Activated T-helper 1 cell treated with anti-CD3 and anti-CD28 coated beads, Interleukin-12 subunit alpha, Interleukin-12 subunit beta, Interleukin-2, Interleukin-4 antibody, amounts not matched to agents 30 ng/mL and 10 ng/mL and 1 ng/mL, durations not matched to agents 14 hours and 24 hours and 36 hours (primary cell): ENCODE measurements at regions of chr1 and their contacts with region 1.

Region 1: DNA sequence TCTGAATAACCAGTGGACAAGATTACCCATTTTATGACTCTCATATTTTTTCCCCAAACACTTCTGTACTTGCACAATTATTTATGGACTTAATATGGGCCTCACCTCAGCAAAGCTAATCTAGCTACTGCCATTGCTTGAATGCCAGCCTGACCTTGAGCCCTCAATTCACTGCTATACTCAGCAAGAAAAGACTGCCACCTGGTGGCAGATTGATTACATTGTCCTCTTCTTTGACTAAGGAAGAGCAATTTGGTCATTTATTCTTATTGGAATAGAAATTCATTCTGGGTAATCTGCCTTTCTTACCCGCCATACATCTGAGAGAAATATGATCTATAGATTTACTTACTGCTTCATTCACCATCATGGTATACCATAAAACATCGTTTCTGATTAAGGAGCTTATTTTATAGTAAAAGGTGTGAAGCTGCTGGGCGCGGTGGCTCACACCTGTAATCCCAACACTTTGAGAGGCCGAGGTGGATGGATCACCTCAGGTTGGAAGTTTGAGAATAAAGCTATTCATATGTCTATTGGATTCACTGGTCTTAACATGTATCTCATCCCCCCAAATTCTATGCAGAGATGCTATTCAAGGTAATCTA is 32.9 kb upstream of the DIPK1A start:
- DNase-seq: peak; percentile 66
- H3K4me3 Mint-ChIP-seq: no peak overlapping the region
- H3K27ac Mint-ChIP-seq: peak overlapping the region; percentile 32
- H3K4me1 Mint-ChIP-seq: peaks cover 48% of the 10 kb centered on the region
- H3K27me3 Mint-ChIP-seq: peaks cover 2% of the 10 kb centered on the region

Region 2: GRCh38 chr1:92749024-92749634 is 245.1 kb before region 1 on chr1:
- intact Hi-C with region 1: loop called (anchors 1 kb)
- DNase-seq: peak; percentile 2
- H3K4me3 Mint-ChIP-seq: no peak overlapping the region
- H3K27ac Mint-ChIP-seq: no peak overlapping the region
- H3K4me1 Mint-ChIP-seq: no peaks in the 10 kb centered on the region
- H3K27me3 Mint-ChIP-seq: peaks cover 9% of the 10 kb centered on the region

Region 3: GRCh38 chr1:92831762-92832536 is 162.3 kb before region 1 on chr1 and contains the start of gene RPL5:
- intact Hi-C with region 1: loop called (anchors 1 kb)
- DNase-seq: peak; percentile 96
- H3K4me3 Mint-ChIP-seq: peak within 1 kb of the TSS; percentile 96
- H3K27ac Mint-ChIP-seq: peak within 1 kb of the TSS; percentile 97
- H3K4me1 Mint-ChIP-seq: peaks cover 35% of the 10 kb centered on the region
- H3K27me3 Mint-ChIP-seq: peaks cover 2% of the 10 kb centered on the region
- total RNA-seq, gene RPL5: 1,115 and 1,120 TPM in 2 replicates

Region 4: DNA sequence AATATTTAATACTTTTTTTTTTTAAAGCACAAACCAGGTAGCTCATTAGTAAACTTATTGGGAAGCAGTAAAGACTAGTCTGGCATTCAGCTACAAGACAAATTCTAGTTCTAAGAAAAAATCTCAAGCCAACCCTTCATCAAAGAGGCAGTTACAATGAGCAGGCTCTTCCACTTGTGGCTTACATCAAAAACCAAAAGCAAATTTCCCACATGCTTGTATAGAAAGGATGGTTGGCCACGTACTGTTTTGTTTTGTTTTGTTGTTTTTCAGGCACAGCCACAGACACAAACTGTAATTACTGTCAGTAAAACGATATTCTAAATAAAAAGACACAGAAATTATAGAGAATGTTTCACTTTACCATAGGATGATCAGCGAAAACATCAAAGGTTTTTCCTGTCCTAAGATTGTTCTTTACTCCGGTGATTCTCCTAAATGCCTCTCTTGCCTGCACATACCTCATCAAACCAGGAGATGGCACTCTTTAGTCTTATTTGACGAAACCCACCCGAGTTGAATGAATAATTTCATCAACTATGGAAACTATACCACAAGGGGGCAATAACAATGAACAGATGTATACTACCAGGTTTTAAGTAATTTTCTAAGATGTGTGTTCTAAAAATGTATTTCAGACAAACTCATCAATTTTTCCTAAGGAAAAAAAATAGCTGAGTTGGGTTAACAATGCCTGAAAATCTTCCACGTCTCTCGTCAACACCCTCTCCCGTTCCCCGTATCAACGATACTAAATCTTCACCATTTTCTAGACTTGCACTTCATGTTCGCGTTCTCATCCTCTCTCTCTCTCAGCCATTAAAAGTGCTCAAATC is 135.4 kb before region 1 on chr1:
- intact Hi-C with region 1: loop called (anchors 1 kb)
- DNase-seq: peak; percentile 57
- H3K4me3 Mint-ChIP-seq: peak overlapping the region; percentile 46
- H3K27ac Mint-ChIP-seq: peak overlapping the region; percentile 64
- H3K4me1 Mint-ChIP-seq: peaks cover 24% of the 10 kb centered on the region
- H3K27me3 Mint-ChIP-seq: no peaks in the 10 kb centered on the region

Region 5: DNA sequence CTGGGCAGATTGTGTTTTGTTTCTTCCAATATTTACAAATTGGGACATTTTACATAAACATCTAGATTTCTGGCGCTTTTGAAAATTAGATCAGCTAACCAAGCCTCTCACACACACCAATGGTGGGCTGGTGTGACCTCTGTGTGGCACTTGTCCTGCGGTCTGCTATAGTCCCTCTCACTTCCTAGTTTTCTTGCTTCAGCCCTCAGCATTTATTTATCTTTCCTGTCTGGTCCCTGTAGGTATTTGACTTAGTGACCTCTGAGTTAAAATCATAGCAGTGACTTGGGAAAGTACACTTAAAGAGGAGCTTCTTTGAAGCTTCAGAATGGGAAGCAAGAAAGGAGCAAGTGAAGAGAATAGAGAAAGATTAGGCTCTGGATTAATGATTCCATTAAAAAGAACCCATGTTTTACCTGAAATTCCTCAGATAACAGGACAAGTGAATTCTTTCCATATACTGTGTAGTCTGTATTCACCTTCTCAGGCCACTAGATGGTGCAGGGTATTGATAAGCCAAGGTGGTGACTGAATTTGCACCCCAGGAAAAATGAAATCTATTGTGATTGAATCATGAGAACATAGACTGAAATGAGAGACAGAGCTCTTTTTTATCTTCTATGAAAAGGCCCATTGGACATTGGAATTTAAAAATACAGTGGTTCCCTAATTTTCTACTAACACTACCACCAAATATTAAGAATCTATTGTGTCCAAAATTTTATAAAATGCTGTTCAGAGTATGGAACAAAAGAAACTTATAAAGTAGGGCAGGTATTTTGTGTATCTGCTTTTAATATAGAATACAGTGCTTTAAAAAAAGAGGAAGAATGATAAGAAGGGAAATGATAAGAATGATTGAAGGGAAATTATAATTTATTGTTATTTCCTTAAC is 25.8 kb before region 1 on chr1:
- intact Hi-C with region 1: loop called (anchors 1 kb)
- DNase-seq: no peak
- H3K4me3 Mint-ChIP-seq: no peak overlapping the region
- H3K27ac Mint-ChIP-seq: no peak overlapping the region
- H3K4me1 Mint-ChIP-seq: peaks cover 42% of the 10 kb centered on the region
- H3K27me3 Mint-ChIP-seq: no peaks in the 10 kb centered on the region

Region 6: GRCh38 chr1:92975551-92976232 is 18.5 kb before region 1 on chr1:
- intact Hi-C with region 1: loop called (anchors 1 kb)
- DNase-seq: no peak
- H3K4me3 Mint-ChIP-seq: peak overlapping the region; percentile 3
- H3K27ac Mint-ChIP-seq: peak overlapping the region; percentile 70
- H3K4me1 Mint-ChIP-seq: peaks cover 80% of the 10 kb centered on the region
- H3K27me3 Mint-ChIP-seq: no peaks in the 10 kb centered on the region

Region 7: DNA sequence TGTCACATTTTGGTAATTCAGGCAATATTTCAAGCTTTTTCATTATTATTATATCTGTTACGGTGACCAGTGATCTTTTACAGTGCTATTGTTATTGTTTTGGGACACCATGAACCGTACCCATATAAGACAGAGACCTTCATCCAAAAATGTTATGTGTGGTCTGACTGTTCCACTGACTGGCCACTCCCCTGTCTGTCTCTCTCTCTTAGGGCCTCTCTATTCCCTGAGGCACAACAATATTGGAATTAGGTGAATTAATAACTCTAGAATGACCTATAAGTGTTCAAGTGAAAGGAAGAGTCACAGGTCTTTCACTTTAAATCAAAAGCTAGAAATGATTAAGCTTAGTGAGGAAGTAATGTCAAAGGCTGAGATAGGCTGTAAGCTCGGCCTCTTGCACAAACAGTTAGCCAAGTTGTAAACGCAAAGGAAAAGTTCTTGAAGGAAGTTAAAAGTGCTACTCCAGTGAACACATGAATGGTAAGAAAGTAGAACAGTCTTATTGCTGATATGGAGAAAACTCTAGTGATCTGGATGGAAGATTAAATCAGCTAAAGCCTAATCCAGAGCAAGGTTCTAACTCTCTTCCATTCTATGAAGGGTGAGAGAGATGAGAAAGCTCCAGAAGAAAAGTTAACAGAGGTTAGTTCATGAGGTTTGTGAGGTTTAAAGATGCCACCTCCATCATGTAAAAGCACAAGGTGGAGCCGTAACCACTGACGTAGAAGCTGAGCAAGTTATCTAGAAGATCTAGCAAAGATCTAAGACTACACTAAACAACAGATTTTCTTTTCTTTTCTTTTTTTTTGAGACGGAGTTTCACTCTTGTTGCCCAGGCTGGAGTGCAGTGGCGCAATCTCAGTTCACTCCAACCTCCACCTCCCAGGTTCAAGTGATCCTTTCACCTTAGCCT is 13.2 kb before region 1 on chr1:
- intact Hi-C with region 1: loop called (anchors 1 kb)
- DNase-seq: peak; percentile 55
- H3K4me3 Mint-ChIP-seq: peak overlapping the region; percentile 60
- H3K27ac Mint-ChIP-seq: peak overlapping the region; percentile 97
- H3K4me1 Mint-ChIP-seq: peaks cover 67% of the 10 kb centered on the region
- H3K27me3 Mint-ChIP-seq: no peaks in the 10 kb centered on the region

Region 8: DNA sequence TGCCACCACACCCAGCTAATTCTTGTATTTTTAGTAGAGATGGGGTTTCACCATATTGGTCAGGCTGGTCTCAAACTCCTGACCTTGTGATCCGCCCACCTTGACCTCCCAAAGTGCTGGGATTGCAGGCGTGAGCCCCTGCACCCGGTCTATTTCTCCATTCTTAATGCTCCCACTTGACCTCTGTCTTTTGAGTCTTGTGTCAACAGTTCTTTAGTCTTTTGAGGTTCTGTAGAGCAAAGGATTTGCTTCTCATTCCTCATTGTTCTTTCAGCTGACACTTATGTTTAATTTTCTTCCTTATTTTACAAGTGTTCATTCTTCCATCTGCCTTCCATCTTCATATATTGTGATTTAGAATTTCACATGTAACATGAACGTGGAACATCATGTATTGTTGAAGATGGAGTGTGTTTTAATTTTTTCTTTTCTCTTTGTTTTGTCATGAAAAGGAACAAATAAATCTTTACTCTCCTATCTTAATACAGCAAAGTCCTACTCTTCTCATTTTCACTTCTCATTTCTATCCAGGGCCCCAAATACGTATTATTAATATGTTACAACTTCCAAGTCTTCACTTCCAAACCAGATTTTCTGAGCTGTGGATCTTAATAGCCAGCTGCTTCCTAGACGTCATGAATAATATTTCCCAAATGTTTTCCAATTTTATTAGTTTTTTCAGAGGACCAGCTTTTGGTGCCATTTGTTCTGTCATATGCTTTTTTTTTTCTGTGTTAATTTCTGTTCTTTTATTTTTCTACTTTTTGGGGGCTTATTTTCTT is 101.8 kb after region 1 on chr1:
- intact Hi-C with region 1: no loop called
- DNase-seq: no peak
- H3K4me3 Mint-ChIP-seq: no peak overlapping the region
- H3K27ac Mint-ChIP-seq: peak overlapping the region; percentile 30
- H3K4me1 Mint-ChIP-seq: peaks cover 29% of the 10 kb centered on the region
- H3K27me3 Mint-ChIP-seq: no peaks in the 10 kb centered on the region